Caco-2 (cell line): ENCODE measurements at regions of chr1 and their contacts with region 1.

Region 1: GRCh38 chr1:59220356-59220755 is 76.5 kb upstream of the FGGY start:
- DNase-seq: no peak
- H3K4me3 ChIP-seq: no peak overlapping the region
- H3K4me3 Mint-ChIP-seq: no peak overlapping the region
- H3K27ac Mint-ChIP-seq: no peak overlapping the region
- H3K4me1 ChIP-seq: no peaks in the 10 kb centered on the region; the same call in 1 of the 2 replicates
- H3K4me1 Mint-ChIP-seq: peaks cover 9% of the 10 kb centered on the region
- H3K27me3 ChIP-seq: no peaks in the 10 kb centered on the region
- H3K27me3 Mint-ChIP-seq: no peaks in the 10 kb centered on the region
- CTCF ChIP-seq: no peak

Region 2: DNA sequence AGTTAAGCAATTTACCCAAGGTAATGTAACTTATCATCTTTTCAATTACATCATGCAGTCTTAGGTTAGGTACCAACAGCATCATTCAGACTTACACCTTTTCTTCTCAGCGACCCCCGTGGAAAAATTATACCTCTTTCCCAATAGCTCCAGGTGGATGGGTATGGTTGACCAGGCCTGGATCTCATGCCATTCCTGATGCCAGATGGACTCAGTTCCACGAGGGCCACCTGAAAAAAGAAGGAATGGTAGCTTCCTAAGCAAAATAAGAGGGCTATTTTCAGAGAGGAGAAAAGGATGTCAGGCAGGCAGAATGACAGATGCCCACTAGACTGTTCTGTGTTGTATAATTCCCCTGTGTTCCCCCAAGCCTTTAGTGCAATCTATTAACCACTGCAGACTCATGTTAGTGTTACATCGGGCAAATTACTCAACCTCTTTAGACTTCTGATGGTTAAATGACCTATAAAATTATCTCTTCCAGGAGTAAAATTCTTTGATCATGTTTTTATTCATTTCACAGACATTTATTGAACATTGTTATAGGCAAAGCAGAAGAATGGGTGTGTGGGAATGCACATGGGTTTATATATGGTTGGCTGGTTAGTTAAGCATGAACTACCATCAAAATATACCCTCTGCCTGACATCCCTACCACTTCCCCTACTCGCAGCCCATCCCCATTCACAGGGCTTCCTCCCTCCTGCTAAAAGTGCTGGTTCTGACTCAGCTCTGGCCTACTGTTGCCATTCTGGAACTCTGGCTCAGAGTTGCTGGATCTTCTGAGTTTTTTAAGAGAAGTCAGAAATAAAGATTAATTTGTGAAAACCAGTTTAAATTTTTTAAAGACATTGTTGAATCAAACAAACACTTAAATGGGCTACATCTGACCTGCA is 509.9 kb before region 1 on chr1:
- CTCF ChIA-PET with region 1: no interaction called
- POLR2A ChIA-PET with region 1: interaction called, 11 read pairs
- intact Hi-C with region 1: no loop called
- DNase-seq: no peak
- H3K4me3 ChIP-seq: no peak overlapping the region
- H3K4me3 Mint-ChIP-seq: no peak overlapping the region
- H3K27ac Mint-ChIP-seq: no peak overlapping the region
- H3K4me1 ChIP-seq: peaks cover 13% of the 10 kb centered on the region
- H3K4me1 Mint-ChIP-seq: peaks cover 22% of the 10 kb centered on the region
- H3K27me3 ChIP-seq: no peaks in the 10 kb centered on the region
- H3K27me3 Mint-ChIP-seq: no peaks in the 10 kb centered on the region
- CTCF ChIP-seq: no peak